Activated CD8-positive, alpha-beta T cell treated with anti-CD3 and anti-CD28 coated beads for 36 hours (primary cell): ENCODE measurements at regions of chr20 and their contacts with region 1.

Region 1: GRCh38 chr20:8043687-8044282 is 24.2 kb upstream of the TMX4 start:
- DNase-seq: peak; percentile 14
- ATAC-seq: peak; percentile 71
- H3K4me3 Mint-ChIP-seq: no peak overlapping the region
- H3K27ac Mint-ChIP-seq: no peak overlapping the region
- H3K4me1 Mint-ChIP-seq: peaks cover 1% of the 10 kb centered on the region
- H3K27me3 Mint-ChIP-seq: peaks cover 4% of the 10 kb centered on the region
- CTCF ChIP-seq: peak; percentile 90

Region 2: DNA sequence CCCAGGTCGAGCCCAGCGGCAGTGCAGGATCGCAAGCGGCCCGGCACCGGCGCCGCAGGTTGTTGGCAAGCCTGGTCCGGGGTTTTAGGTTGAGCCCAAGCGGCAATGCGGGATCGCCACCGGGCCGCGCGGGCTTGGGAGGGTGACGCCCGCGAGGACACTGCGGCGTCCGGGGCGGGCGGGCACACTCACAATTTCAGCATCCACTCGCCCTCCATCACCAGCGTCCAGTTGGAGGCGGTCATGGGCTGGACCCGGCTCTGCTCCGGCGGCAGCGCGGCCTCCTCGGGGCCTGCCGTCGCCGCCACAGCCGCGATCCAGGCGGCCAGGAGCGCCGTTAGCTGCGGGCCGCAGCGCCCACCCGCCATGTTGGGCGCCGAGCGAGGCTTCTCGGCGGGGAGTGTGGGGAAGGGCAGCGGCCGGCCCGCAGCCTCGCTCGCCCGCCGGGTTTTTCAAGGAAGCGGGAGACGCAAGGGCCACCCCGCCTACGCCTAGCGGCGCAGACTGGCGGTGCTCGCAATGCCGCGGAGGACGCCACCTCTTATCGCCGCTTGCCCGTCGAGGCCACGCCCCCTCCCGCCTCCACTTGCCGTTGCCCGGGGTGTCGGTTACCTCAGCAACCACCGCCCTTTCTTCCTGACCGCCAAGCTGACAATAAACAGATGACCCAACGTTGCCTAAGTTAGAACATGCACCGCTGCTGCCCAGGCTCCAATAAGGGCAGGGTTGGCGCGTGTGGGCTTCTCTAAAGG is 24.4 kb before region 1 on chr20 and contains the start of gene TMX4:
- CTCF ChIA-PET with region 1: interaction called, 18 read pairs
- POLR2A ChIA-PET with region 1: no interaction called
- intact Hi-C with region 1: no loop called
- DNase-seq: peak; percentile 96
- ATAC-seq: peak; percentile 88
- H3K4me3 Mint-ChIP-seq: no peak within 1 kb of the TSS
- H3K27ac Mint-ChIP-seq: peak within 1 kb of the TSS; percentile 82
- H3K4me1 Mint-ChIP-seq: peaks cover 29% of the 10 kb centered on the region
- H3K27me3 Mint-ChIP-seq: no peaks in the 10 kb centered on the region
- CTCF ChIP-seq: peak; percentile 15
- total RNA-seq, gene TMX4: 21.2 to 21.8 TPM

Region 3: DNA sequence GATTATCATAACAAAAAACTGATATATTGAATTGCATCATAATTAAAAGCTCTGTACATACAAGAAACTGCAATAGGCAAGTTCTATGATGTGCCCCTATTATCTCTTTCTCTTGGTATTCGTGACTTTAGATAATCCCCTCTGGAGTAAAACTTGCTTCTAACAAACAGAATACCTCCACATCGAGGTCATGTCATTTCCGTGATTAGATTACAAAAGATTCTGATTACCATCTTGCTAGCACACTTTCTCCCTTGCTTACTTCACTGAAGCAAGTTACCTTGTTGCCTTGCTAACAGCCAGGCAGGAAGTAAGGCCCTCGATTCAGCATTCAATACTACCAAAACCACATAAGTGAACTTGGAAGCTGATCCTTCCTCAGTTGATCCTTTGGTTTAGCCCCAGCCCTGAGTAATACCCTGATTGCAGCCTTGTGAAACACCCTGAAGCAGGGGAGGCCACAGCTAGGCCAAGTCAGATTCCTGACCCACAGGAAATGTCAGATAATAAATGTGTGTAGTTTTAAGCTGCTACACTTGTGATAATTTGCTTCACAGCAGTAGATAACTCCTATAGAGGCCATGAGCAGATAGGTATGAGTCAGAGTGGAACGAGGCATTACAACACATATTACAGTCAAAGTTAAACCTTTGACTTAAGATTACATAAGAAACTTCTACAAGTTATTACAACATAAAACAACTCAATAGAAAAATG is 29.5 kb after region 1 on chr20:
- CTCF ChIA-PET with region 1: interaction called, 11 read pairs
- POLR2A ChIA-PET with region 1: no interaction called
- intact Hi-C with region 1: no loop called
- DNase-seq: no peak
- ATAC-seq: peak; percentile 79
- H3K4me3 Mint-ChIP-seq: no peak overlapping the region
- H3K27ac Mint-ChIP-seq: peak overlapping the region; percentile 78
- H3K4me1 Mint-ChIP-seq: peaks cover 7% of the 10 kb centered on the region
- H3K27me3 Mint-ChIP-seq: no peaks in the 10 kb centered on the region
- CTCF ChIP-seq: no peak

Region 4: GRCh38 chr20:8305449-8305978 is 261.7 kb after region 1 on chr20:
- CTCF ChIA-PET with region 1: interaction called, 3 read pairs
- POLR2A ChIA-PET with region 1: no interaction called
- intact Hi-C with region 1: loop called (anchors 5 kb)
- DNase-seq: peak; percentile 83
- ATAC-seq: peak; percentile 83
- H3K4me3 Mint-ChIP-seq: no peak overlapping the region
- H3K27ac Mint-ChIP-seq: no peak overlapping the region
- H3K4me1 Mint-ChIP-seq: no peaks in the 10 kb centered on the region
- H3K27me3 Mint-ChIP-seq: peaks cover 2% of the 10 kb centered on the region
- CTCF ChIP-seq: peak; percentile 71

Region 5: GRCh38 chr20:8535403-8536261 is 491.8 kb after region 1 on chr20:
- CTCF ChIA-PET with region 1: interaction called, 3 read pairs
- POLR2A ChIA-PET with region 1: interaction called, 3 read pairs
- intact Hi-C with region 1: loop called (anchors 10 kb)
- DNase-seq: peak; percentile 24
- ATAC-seq: no peak
- H3K4me3 Mint-ChIP-seq: no peak overlapping the region
- H3K27ac Mint-ChIP-seq: no peak overlapping the region
- H3K4me1 Mint-ChIP-seq: no peaks in the 10 kb centered on the region
- H3K27me3 Mint-ChIP-seq: no peaks in the 10 kb centered on the region
- CTCF ChIP-seq: peak; percentile 41